A549 (cell line): ENCODE measurements at regions of chr17 and their contacts with region 1.

Region 1: DNA sequence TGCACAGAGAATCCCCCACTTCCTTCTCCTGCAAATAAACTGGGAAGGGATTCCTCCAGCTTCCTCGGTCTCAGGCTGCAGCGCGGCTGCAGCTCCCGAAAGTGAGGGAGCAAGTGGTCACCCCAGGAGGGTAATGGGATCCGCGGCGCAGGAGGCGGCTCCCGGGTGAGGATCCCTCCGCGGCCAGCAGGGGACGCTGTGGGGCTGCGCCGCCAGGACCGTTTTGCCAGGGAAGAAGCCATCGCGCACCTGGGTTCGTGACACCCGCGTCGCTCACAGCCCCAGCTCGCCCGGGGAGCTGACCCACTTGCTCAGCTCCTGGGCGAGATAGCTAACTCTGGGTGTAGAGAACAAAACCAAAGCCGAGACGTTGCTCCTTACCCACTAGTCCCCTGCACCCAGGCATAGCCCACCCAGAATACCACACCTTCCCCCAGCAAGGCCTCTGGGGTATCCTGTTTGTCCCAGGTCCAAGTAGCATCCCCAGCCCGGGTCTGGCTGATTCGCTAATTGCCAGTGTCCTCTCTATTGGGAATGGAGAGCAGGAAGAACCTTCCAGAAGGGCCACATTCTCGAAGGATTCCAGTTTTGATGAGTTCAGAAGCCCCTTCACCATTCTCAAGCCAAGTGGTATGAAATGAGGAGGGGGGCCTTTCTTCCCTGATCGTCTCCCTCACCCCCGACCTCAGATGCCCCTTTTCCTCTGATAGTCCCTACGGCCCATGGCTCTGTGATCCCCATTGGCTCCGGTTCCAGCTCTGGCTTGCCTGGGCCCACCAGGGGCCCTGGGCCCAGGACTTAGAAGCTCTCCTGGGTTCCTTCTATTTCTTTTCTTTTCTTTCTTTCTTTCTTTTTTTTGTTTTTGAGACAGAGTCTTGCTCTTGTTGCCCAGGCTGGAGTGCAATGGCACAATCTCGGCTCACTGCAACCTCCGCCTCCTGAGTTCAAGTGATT is 14.1 kb downstream of the CYGB start:
- DNase-seq: peak; percentile 75 to 93
- ATAC-seq: peak; percentile 79 to 88
- H3K4me3 ChIP-seq: no peak overlapping the region
- H3K27ac ChIP-seq: peak overlapping the region in 1 of 2 experiments; percentile 47; a peak in 1 of 6 replicates
- H3K4me1 ChIP-seq: peaks cover 20% of the 10 kb centered on the region
- CTCF ChIP-seq: peak; percentile 100
- EP300 ChIP-seq: no peak
- POLR2A ChIP-seq: no peak
- RAD21 ChIP-seq: peak; percentile 97 to 99

Region 2: DNA sequence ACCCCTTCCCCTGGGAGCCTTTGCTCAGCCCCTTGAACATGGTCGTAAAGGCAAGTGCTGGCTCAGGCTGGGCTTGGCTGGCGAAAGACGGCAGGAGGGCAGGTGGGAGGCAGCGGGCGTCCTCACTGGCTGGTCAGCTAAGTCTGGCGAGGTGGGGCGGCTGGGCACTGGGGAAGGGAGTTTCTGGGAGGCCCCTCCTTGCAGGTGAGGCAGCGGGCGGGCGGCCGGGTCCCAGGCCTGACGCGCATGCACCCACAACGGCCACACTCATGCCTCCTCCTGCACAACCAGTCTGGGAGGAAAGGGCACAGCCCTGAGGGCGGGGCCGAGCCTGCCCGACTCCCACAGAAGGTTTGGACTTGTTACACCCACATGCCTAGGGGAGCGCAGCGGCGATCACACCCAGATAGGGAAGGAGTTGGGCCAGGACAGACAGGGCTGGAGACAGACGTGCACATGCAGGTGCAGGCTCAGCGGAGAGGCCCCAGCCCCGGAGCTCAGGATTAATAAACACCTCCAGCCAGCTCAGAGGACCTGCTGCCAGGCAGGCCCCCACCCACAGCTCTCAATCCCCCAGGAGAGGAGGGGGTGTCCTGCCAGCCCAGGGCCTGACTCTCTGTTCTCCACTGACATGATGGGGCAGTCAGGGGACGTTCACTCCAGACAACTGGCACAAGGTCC is 496.1 kb before region 1 on chr17 and contains the start of gene EVPL:
- CTCF ChIA-PET with region 1: no interaction called
- POLR2A ChIA-PET with region 1: no interaction called
- DNase-seq: peak; percentile 62 to 88
- ATAC-seq: peak; percentile 87 to 94
- H3K4me3 ChIP-seq: peak within 1 kb of the TSS; percentile 74
- H3K27ac ChIP-seq: peak within 1 kb of the TSS; percentile 93
- H3K4me1 ChIP-seq: peaks cover 29% of the 10 kb centered on the region
- CTCF ChIP-seq: no peak
- EP300 ChIP-seq: no peak
- POLR2A ChIP-seq: peak; percentile 70
- RAD21 ChIP-seq: no peak
- polyA plus RNA-seq, gene EVPL: 4.0 and 4.1 TPM in 2 replicates

Region 3: GRCh38 chr17:76506408-76507349 is 16.7 kb before region 1 on chr17:
- CTCF ChIA-PET with region 1: interaction called, 199 read pairs
- POLR2A ChIA-PET with region 1: interaction called, 6 read pairs
- DNase-seq: peak; percentile 71 to 95
- ATAC-seq: peak; percentile 80 to 90
- H3K4me3 ChIP-seq: no peak overlapping the region
- H3K27ac ChIP-seq: peak overlapping the region; percentile 52 to 73; a peak in 5 of 6 replicates
- H3K4me1 ChIP-seq: peaks cover 9% of the 10 kb centered on the region
- CTCF ChIP-seq: peak; percentile 98
- EP300 ChIP-seq: no peak
- POLR2A ChIP-seq: no peak
- RAD21 ChIP-seq: peak; percentile 99

Region 4: DNA sequence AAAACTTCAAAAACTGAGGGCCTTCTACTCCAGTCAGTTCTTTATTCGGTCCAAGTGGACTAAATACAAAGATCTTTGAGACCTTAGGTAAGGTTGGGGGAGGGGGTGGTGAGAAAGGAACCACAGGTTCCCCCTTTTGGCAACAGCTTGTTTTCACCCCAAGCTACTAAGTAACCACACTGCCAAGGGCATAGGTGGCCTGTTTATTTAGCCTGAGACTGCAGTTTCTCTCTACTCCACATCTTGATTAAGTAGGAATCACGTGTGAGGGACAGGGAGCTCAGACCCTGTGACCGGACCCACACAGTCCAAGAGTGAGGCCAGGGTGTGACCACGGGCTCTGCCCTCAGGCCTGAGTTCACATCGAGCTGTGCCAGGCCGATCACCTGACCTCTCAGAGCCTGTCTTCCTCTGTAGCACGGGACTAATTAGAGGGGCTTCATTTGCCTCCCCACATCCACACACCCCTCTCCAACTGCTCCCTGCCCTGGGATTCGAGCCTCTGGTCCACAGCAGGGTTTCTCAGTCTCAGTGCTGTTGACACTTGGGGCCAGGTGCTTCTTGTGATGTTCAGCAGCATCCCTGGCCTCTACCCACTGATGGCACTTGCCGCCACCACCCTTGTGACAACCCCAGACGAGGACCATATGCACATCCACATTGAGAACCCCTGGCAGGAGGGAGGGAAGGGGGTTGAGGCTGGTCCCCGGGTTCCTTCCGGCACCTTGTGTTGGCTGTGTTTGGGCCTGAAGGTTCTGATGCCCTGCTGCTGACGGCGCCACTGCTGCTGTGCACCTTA is 44.5 kb after region 1 on chr17:
- CTCF ChIA-PET with region 1: interaction called, 185 read pairs
- POLR2A ChIA-PET with region 1: no interaction called
- DNase-seq: no peak
- ATAC-seq: peak; percentile 30 to 46
- H3K4me3 ChIP-seq: no peak overlapping the region
- H3K27ac ChIP-seq: peak overlapping the region in 1 of 2 experiments; percentile 23; a peak in 2 of 6 replicates
- H3K4me1 ChIP-seq: peaks cover 34% of the 10 kb centered on the region; the same call in 2 of the 3 replicates
- CTCF ChIP-seq: no peak
- EP300 ChIP-seq: no peak
- POLR2A ChIP-seq: no peak
- RAD21 ChIP-seq: no peak

Region 5: DNA sequence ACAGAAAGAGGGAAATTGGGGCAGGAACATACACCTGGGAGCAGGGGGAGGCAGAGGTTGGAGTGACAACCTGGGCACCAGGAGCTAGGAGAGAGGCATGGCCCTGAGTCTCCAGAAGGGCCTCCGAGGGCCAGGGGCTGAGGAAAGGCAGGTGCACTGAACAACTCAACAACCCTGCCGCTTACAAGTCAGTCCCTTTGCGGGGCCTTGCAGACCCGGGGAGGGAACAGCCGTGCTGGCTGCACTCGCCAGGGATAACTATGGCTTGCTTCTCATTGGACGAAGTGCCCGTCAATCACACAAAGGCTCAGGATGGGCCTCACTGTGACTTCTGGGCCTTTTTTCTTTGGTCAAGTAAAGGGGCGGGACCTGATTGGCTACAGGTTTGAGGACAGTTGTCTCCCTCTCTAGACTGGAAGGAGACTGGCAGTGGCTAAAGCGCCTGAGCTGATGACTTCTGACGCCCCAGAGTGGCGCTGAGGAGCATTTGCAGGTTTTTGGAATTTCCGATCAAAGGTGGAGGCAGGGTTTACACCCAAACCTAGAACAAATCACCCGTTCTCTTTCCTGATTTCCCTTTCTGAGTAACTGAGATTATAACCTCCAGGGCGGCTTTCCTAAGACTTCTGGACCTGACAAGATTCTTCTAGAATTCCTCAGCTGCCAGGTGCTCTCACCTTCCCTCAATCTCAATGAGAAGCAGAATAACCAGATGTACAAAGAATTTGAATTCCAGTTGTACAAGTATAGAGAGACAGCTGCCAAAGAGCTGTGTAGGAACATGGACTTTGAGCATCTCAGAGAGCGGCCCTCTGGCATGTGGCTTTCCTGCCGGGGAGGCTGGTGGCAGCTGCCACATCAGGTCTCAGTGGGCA is 89.9 kb after region 1 on chr17:
- CTCF ChIA-PET with region 1: interaction called, 11 read pairs
- POLR2A ChIA-PET with region 1: no interaction called
- DNase-seq: peak in 1 of 2 experiments; percentile 58
- ATAC-seq: peak; percentile 58 to 79; a peak in 5 of 6 replicates
- H3K4me3 ChIP-seq: no peak overlapping the region
- H3K27ac ChIP-seq: no peak overlapping the region
- H3K4me1 ChIP-seq: peaks cover 10% of the 10 kb centered on the region
- CTCF ChIP-seq: no peak
- EP300 ChIP-seq: no peak
- POLR2A ChIP-seq: no peak
- RAD21 ChIP-seq: 0 out of 5 replicates have a peak, but pooled peaks of 1 of the 2 experiments have one; percentile 14

Region 6: GRCh38 chr17:76681222-76682137 is 158.1 kb after region 1 on chr17:
- CTCF ChIA-PET with region 1: interaction called, 130 read pairs
- POLR2A ChIA-PET with region 1: no interaction called
- DNase-seq: peak; percentile 77 to 84
- ATAC-seq: peak; percentile 75 to 90; a peak in 5 of 6 replicates
- H3K4me3 ChIP-seq: no peak overlapping the region
- H3K27ac ChIP-seq: no peak overlapping the region
- H3K4me1 ChIP-seq: no peaks in the 10 kb centered on the region
- CTCF ChIP-seq: peak; percentile 83
- EP300 ChIP-seq: no peak
- POLR2A ChIP-seq: no peak
- RAD21 ChIP-seq: peak; percentile 82 to 84

Region 7: GRCh38 chr17:77068915-77069314 is 545.6 kb after region 1 on chr17:
- CTCF ChIA-PET with region 1: interaction called, 11 read pairs
- POLR2A ChIA-PET with region 1: no interaction called
- DNase-seq: no peak
- ATAC-seq: peak in 1 of 2 experiments; percentile 21; a peak in 2 of 6 replicates
- H3K4me3 ChIP-seq: no peak overlapping the region
- H3K27ac ChIP-seq: peak overlapping the region in 1 of 2 experiments; percentile 6; a peak in 1 of 6 replicates
- H3K4me1 ChIP-seq: peaks cover 5% of the 10 kb centered on the region; the same call in 1 of the 3 replicates
- CTCF ChIP-seq: no peak
- EP300 ChIP-seq: no peak
- POLR2A ChIP-seq: no peak
- RAD21 ChIP-seq: no peak